ENCODE measurements at regions of chr2 and their contacts with region 1.

Region 1: DNA sequence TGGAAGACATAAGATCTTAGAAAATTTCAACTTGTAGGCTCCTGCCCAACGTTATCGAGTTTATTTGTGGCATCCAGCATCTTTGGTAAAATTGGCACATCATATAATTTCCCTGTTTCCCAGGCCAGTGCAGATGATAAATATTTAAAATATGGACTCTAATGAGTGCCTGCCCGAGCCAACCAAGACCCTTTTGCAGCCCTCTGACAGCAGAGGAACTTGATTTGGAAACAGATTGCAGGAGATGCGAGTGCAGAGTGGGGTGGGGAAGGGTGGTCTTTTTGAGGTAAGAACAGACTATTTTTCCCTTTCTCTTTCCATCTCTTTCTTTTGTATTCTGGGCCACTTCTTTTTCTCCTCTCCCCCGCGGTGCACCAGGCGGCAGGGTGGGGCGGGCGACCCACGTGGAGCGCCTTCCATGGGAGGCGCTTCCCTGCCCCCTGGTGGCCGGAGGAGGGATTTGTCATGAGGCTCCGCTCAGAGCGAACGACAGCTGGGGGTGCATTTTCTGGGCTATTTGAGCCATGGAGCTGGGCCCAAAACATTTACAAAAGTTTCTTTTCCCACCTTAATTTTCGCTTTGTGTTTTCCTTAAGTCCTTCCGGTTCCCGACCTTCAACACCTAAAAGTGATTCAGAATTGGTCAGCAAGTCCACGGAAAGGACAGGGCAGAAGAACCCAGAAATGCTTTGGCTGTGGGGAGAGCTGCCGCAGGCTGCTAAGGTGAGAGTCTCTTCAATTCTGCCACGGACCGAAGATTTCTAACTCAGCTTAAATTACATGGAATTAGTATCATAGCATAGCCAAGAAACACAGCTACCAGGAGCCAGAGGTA is 32.7 kb downstream of the LPIN1 start:
- DNase-seq: peak; percentile 34
- ATAC-seq: peak; percentile 100
- H3K4me3 ChIP-seq: 0 out of 4 replicates have a peak overlapping the region, but pooled peaks of 1 of the 2 experiments have one; percentile 28
- H3K27ac ChIP-seq: no peak overlapping the region
- H3K4me1 ChIP-seq: peaks cover 0 to 11% of the 10 kb centered on the region in 2 experiments; a peak in 3 of 4 replicates
- H3K27me3 ChIP-seq: no peaks in the 10 kb centered on the region
- CTCF ChIP-seq: peak; percentile 87 to 96 (median 96)
- POLR2A ChIP-seq: no peak
- RAD21 ChIP-seq: peak; percentile 98

Region 2: GRCh38 chr2:11377928-11378545 is 401.1 kb before region 1 on chr2:
- CTCF ChIA-PET with region 1: no interaction called
- POLR2A ChIA-PET with region 1: no interaction called
- RAD21 ChIA-PET with region 1: no interaction called
- intact Hi-C with region 1: no loop called
- DNase-seq: no peak
- ATAC-seq: no peak
- H3K4me3 ChIP-seq: no peak overlapping the region
- H3K27ac ChIP-seq: no peak overlapping the region
- H3K4me1 ChIP-seq: peaks cover 23% of the 10 kb centered on the region in 2 experiments
- H3K27me3 ChIP-seq: no peaks in the 10 kb centered on the region
- CTCF ChIP-seq: no peak
- POLR2A ChIP-seq: no peak
- RAD21 ChIP-seq: no peak

Region 3: DNA sequence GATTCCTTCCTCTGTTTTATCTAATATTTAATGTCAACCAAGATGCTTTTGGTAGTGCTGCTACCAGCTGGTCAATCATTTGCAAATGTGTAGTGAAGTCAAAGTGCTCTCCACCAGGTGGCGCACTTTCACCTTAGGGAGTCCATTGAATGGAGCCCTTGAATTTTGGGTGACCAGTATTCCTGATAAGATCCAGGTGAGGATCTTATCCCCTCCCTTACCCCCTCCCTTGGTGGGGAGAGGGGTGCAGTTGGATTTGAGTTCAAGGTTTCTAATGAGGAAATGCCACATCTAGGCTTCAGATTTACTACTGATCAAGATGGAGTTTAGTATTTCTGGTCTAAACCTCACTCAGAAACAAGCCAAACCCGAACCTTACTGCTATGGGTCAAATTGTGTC is 301.1 kb before region 1 on chr2:
- CTCF ChIA-PET with region 1: no interaction called
- POLR2A ChIA-PET with region 1: no interaction called
- RAD21 ChIA-PET with region 1: no interaction called
- intact Hi-C with region 1: loop called (anchors 5 kb)
- DNase-seq: peak; percentile 76
- ATAC-seq: peak; percentile 70
- H3K4me3 ChIP-seq: no peak overlapping the region
- H3K27ac ChIP-seq: no peak overlapping the region
- H3K4me1 ChIP-seq: peaks cover 0 to 1% of the 10 kb centered on the region in 2 experiments; a peak in 1 of 4 replicates
- H3K27me3 ChIP-seq: no peaks in the 10 kb centered on the region
- CTCF ChIP-seq: peak; percentile 74 to 96 (median 91)
- POLR2A ChIP-seq: no peak
- RAD21 ChIP-seq: peak; percentile 92

Region 4: GRCh38 chr2:11583840-11584524 is 195.2 kb before region 1 on chr2:
- CTCF ChIA-PET with region 1: interaction called, 4 read pairs
- POLR2A ChIA-PET with region 1: no interaction called
- RAD21 ChIA-PET with region 1: interaction called in 1 of 2 experiments, 4 read pairs
- intact Hi-C with region 1: loop called (anchors 5 kb)
- DNase-seq: peak; percentile 69
- ATAC-seq: peak; percentile 81
- H3K4me3 ChIP-seq: no peak overlapping the region
- H3K27ac ChIP-seq: no peak overlapping the region
- H3K4me1 ChIP-seq: peaks cover 4 to 21% of the 10 kb centered on the region in 2 experiments
- H3K27me3 ChIP-seq: no peaks in the 10 kb centered on the region
- CTCF ChIP-seq: peak; percentile 93 to 96 (median 94)
- POLR2A ChIP-seq: no peak
- RAD21 ChIP-seq: peak; percentile 96

Region 5: DNA sequence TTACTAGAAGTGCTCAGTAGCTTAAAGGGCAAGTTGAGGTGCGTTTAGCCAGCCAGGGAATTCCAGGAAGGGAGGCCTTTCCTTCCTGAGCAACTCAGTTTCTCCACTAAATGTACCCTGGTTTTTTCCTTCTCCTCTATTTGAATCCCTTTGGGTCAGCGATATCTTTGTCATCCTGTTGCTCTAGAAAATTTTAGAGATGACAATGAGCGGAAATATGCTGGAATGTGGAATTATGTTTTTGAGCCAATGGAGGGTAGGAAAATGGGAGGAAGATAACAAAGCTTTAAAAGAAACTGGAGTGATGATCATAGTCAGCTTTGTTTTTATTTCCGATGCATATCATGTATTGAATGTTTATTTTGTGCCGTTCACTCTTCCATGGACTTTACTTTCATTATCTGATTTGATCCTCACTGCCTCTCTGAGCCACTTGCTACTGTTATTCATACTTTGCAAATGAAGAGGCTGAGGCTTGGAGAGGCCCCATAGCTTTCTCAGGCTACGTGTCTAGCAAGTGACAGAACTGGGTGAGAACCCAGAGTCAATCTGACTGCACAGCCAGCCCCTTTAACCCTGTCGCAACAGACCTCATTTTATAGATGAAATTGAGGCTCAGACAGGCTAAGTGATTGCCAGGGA is 176.5 kb before region 1 on chr2:
- CTCF ChIA-PET with region 1: no interaction called
- POLR2A ChIA-PET with region 1: no interaction called
- RAD21 ChIA-PET with region 1: no interaction called
- intact Hi-C with region 1: no loop called
- DNase-seq: no peak
- ATAC-seq: no peak
- H3K4me3 ChIP-seq: no peak overlapping the region
- H3K27ac ChIP-seq: no peak overlapping the region
- H3K4me1 ChIP-seq: no peaks in the 10 kb centered on the region
- H3K27me3 ChIP-seq: no peaks in the 10 kb centered on the region
- CTCF ChIP-seq: no peak
- POLR2A ChIP-seq: no peak
- RAD21 ChIP-seq: no peak

Region 6: GRCh38 chr2:11688222-11689069 is 90.7 kb before region 1 on chr2:
- CTCF ChIA-PET with region 1: interaction called, 13 read pairs
- POLR2A ChIA-PET with region 1: no interaction called
- RAD21 ChIA-PET with region 1: interaction called in 1 of 2 experiments, 3 read pairs
- intact Hi-C with region 1: loop called (anchors 1 kb)
- DNase-seq: peak; percentile 61
- ATAC-seq: peak; percentile 89
- H3K4me3 ChIP-seq: peak overlapping the region; percentile 15 to 42; a peak in 3 of 4 replicates
- H3K27ac ChIP-seq: no peak overlapping the region
- H3K4me1 ChIP-seq: peaks cover 8 to 20% of the 10 kb centered on the region in 2 experiments; a peak in 3 of 4 replicates
- H3K27me3 ChIP-seq: no peaks in the 10 kb centered on the region
- CTCF ChIP-seq: peak; percentile 85 to 97 (median 88)
- POLR2A ChIP-seq: no peak
- RAD21 ChIP-seq: peak; percentile 87

Region 7: DNA sequence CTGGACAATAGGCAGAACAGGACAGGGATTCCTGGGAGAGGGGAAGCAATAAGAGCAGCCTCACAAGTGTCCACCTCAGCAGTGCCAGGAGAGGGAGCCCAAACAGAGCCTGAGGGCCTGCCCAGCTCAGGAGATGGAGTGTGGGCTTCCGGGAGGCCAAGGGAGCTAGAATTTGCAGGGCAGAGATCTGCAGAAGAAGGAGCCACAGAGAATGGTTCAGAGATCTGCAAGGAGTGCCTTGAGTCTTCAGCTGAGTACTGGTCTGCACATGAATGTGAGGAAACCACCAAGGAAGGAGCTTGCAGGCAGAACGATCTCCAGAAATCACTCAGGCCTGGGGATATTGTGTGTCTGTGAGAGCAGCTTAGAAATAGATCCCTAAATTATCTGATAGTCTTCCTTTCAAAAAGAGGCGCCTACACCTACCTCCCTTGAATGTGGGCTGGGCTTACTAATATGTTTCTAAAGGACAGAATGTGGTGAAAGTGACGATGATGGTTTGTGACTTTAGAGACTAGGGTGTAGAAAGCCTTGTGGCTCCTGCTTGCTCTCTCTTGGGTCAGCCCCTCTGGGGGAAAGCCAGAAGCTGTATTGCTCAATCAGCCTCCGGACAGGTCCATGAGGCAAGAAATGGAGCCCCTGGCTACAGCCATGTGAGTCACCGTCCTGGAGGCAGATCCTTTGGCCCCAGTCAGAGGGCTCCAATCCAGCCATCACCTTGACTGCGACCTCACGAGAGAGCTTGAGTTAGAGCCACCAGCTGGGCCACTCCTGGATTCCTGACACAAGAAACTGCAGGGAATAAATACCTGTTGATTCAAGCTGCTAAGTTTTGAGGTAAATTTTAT is 40.3 kb before region 1 on chr2:
- CTCF ChIA-PET with region 1: interaction called, 36 read pairs
- POLR2A ChIA-PET with region 1: interaction called, 3 read pairs
- RAD21 ChIA-PET with region 1: interaction called, 3 to 9 read pairs
- intact Hi-C with region 1: loop called (anchors 1 kb)
- DNase-seq: peak; percentile 39
- ATAC-seq: peak; percentile 91
- H3K4me3 ChIP-seq: no peak overlapping the region
- H3K27ac ChIP-seq: no peak overlapping the region
- H3K4me1 ChIP-seq: peaks cover 25 to 33% of the 10 kb centered on the region in 2 experiments
- H3K27me3 ChIP-seq: no peaks in the 10 kb centered on the region
- CTCF ChIP-seq: peak in 2 of 3 experiments; percentile 63 to 71; a peak in 4 of 6 replicates
- POLR2A ChIP-seq: no peak
- RAD21 ChIP-seq: no peak

Region 8: GRCh38 chr2:11743846-11744553 is 35.1 kb before region 1 on chr2:
- CTCF ChIA-PET with region 1: interaction called, 36 read pairs
- POLR2A ChIA-PET with region 1: interaction called, 3 read pairs
- RAD21 ChIA-PET with region 1: interaction called, 4 to 9 read pairs
- intact Hi-C with region 1: no loop called
- DNase-seq: peak; percentile 98
- ATAC-seq: peak; percentile 82
- H3K4me3 ChIP-seq: peak overlapping the region; percentile 49 to 60
- H3K27ac ChIP-seq: peak overlapping the region; percentile 69
- H3K4me1 ChIP-seq: peaks cover 50 to 64% of the 10 kb centered on the region in 2 experiments
- H3K27me3 ChIP-seq: no peaks in the 10 kb centered on the region
- CTCF ChIP-seq: no peak
- POLR2A ChIP-seq: no peak
- RAD21 ChIP-seq: no peak

Measured in HCT116 (cell line).